ENCODE measurements at regions of chr2 and their contacts with region 1.

Region 1: GRCh38 chr2:170973492-170974303 is 44.6 kb downstream of the GORASP2 start:
- DNase-seq: peak; percentile 68 to 86 (median 78)
- H3K4me3 ChIP-seq: peak overlapping the region; percentile 59 to 96 (median 81)
- H3K27ac ChIP-seq: peak overlapping the region in 49 of 59 donors; percentile 15 to 89 (median 74)
- H3K27me3 ChIP-seq: no peaks in the 10 kb centered on the region
- CTCF ChIP-seq: peak; percentile 61 to 99 (median 93)

Region 2: DNA sequence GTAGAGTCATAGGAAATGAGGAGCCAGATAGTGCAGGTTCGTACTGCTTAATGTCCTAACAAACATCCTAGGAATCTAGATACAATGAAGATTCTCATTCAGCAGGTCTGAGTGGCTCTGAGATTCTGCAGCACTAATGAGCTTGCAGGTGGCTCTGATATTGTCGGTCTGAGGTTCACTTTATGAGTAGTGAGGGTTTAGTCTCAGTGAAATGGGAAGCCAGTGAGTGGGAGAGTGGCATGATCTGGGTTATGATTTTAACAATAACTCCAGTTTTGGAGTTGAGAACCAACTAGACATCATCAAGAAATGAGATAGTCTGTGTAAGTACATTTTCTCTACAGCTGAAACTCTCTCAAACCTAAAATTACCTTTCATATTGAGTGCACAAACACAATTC is 425.4 kb before region 1 on chr2:
- intact Hi-C with region 1: no loop called
- DNase-seq: no peak
- H3K4me3 ChIP-seq: no peak overlapping the region
- H3K27ac ChIP-seq: no peak overlapping the region
- H3K27me3 ChIP-seq: no peaks in the 10 kb centered on the region
- CTCF ChIP-seq: no peak

Region 3: DNA sequence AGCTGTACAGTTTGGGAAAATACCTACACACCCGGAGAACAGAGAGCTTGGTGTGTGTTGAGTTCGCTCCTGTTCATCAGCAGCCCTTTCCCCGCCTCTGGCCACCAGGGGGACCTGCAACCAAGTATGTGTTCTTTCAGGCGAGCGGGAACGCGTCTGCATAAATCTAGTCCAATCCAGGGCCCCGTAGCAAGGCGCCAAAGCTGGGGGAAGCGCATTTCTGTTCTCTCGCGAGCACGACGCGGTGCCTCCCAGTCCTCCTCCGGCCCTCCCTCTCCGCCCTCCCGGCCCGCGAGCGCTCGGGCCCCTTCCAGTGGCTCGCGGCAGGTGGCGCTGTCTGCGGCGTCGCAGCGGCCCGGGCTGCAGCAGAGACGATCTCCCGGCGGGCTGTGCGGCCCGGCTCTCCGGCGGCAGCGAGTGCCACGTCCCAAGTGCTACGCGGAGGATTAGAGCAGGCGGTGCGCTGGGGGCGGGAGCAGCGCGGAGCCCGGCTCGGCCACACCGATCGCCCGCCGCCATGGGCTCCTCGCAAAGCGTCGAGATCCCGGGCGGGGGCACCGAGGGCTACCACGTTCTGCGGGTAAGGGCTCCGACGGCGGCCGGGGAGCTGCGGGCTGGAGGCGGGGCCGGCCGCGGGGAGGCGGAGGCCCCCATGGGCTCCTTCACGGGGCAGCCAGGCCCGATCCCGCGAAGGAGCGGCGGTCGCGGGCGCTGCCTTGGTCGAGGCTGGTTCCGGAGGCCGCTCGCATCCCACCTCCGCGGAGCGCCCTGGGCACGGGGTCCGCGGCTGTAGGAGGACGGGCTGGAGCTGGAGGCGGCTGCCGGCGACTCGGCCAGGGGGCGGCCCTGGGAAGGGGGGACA is 44.6 kb before region 1 on chr2 and contains the start of gene GORASP2:
- intact Hi-C with region 1: loop called in 1 of 2 experiments (anchors 2 kb)
- DNase-seq: peak; percentile 95 to 100 (median 98)
- H3K4me3 ChIP-seq: peak within 1 kb of the TSS; percentile 59 to 99 (median 92)
- H3K27ac ChIP-seq: peak within 1 kb of the TSS; percentile 46 to 97 (median 88)
- H3K27me3 ChIP-seq: no peaks in the 10 kb centered on the region
- CTCF ChIP-seq: peak in 55 of 56 donors; percentile 87 to 100 (median 97)
- total RNA-seq, gene GORASP2: 28.3 to 69.0 (median 51.0) TPM

Region 4: GRCh38 chr2:171056307-171056706 is 82.6 kb after region 1 on chr2:
- intact Hi-C with region 1: no loop called
- DNase-seq: no peak
- H3K4me3 ChIP-seq: no peak overlapping the region
- H3K27ac ChIP-seq: no peak overlapping the region
- H3K27me3 ChIP-seq: no peaks in the 10 kb centered on the region
- CTCF ChIP-seq: no peak

Region 5: DNA sequence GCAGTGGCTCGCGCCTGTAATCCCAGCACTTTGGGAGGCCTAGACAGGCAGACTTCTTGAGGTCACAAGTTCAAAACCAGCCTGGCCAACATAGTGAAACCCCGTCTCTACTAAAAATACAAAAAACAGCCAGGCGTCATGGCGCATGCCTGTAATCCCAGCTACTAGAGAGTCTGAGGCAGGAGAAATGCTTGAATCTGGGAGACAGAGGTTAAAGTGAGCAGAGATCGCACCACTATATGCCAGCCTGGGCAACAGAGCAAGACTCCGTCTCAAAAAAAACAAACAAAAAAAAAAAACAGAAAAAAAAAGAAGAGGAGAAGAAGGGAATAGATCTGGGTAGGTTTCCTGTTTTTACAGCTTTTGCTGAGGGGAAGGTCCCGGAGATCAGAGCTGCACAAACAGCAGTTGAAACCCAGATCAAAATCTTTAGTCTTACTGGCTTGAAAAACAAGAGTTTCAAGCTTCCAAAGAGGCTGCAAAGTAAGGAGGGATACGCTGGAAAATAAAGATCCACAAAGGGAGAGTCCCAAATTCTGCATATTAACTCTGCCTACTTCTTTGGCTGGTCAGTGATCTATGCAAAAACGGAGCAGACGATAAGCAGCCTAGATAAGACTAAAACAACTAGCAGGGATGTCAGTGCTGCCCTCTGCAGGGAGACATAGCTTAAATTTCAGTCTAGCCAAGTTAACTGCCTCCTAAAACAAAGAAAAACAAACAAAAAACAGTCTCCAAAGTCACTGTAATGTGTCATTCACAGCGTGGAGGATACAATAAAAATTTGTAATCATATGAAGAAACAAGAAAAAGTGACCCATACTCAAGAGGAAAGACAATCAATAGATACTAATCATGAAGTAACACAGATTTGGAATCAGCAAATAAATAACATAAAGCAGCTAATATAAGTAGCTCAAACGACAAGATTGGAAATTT is 112.9 kb after region 1 on chr2:
- intact Hi-C with region 1: loop called in 1 of 2 experiments (anchors 2 kb)
- DNase-seq: peak in 2 of 10 donors; percentile 14 to 41
- H3K4me3 ChIP-seq: peak overlapping the region in 19 of 59 donors; percentile 4 to 37 (median 23)
- H3K27ac ChIP-seq: peak overlapping the region in 1 of 59 donors; percentile 36
- H3K27me3 ChIP-seq: no peaks in the 10 kb centered on the region
- CTCF ChIP-seq: peak in 55 of 56 donors; percentile 22 to 75 (median 59)

Region 6: GRCh38 chr2:171160119-171160955 is 186.6 kb after region 1 on chr2 and contains the start of gene TLK1:
- intact Hi-C with region 1: loop called (anchors 2 kb)
- DNase-seq: peak; percentile 38 to 77 (median 62)
- H3K4me3 ChIP-seq: peak within 1 kb of the TSS; percentile 65 to 92 (median 81)
- H3K27ac ChIP-seq: peak within 1 kb of the TSS; percentile 57 to 98 (median 93)
- H3K27me3 ChIP-seq: no peaks in the 10 kb centered on the region
- CTCF ChIP-seq: peak in 1 of 56 donors; percentile 9
- total RNA-seq, gene TLK1: 42.9 to 119 (median 84.6) TPM

Region 7: GRCh38 chr2:171416009-171416926 is 442.6 kb after region 1 on chr2:
- intact Hi-C with region 1: loop called (anchors 1 to 2 kb)
- DNase-seq: peak; percentile 50 to 96 (median 90)
- H3K4me3 ChIP-seq: peak overlapping the region in 9 of 59 donors; percentile 4 to 26 (median 12)
- H3K27ac ChIP-seq: peak overlapping the region in 48 of 59 donors; percentile 1 to 85 (median 54)
- H3K27me3 ChIP-seq: no peaks in the 10 kb centered on the region
- CTCF ChIP-seq: peak; percentile 67 to 94 (median 85)

Region 8: GRCh38 chr2:171433763-171434670 is 460.3 kb after region 1 on chr2 and contains the starts of genes DCAF17 and METTL8:
- intact Hi-C with region 1: loop called (anchors 5 kb)
- DNase-seq: peak; percentile 91 to 98 (median 96)
- H3K4me3 ChIP-seq: peak within 1 kb of the TSS; percentile 67 to 99 (median 88)
- H3K27ac ChIP-seq: peak within 1 kb of the TSS; percentile 80 to 99 (median 96)
- H3K27me3 ChIP-seq: no peaks in the 10 kb centered on the region
- CTCF ChIP-seq: peak; percentile 18 to 81 (median 62)
- total RNA-seq, gene DCAF17: 15.9 to 42.0 (median 28.0) TPM
- total RNA-seq, gene METTL8: 14.3 to 33.4 (median 21.6) TPM

Measured in dorsolateral prefrontal cortex (tissue), 120 donors.